Activated CD8-positive, alpha-beta memory T cell treated with anti-CD3 and anti-CD28 coated beads, Interleukin-2, amount 10 ng/mL, durations not matched to agents 7 days and 5 days (primary cell): ENCODE measurements at regions of chr20 and their contacts with region 1.

Region 1: DNA sequence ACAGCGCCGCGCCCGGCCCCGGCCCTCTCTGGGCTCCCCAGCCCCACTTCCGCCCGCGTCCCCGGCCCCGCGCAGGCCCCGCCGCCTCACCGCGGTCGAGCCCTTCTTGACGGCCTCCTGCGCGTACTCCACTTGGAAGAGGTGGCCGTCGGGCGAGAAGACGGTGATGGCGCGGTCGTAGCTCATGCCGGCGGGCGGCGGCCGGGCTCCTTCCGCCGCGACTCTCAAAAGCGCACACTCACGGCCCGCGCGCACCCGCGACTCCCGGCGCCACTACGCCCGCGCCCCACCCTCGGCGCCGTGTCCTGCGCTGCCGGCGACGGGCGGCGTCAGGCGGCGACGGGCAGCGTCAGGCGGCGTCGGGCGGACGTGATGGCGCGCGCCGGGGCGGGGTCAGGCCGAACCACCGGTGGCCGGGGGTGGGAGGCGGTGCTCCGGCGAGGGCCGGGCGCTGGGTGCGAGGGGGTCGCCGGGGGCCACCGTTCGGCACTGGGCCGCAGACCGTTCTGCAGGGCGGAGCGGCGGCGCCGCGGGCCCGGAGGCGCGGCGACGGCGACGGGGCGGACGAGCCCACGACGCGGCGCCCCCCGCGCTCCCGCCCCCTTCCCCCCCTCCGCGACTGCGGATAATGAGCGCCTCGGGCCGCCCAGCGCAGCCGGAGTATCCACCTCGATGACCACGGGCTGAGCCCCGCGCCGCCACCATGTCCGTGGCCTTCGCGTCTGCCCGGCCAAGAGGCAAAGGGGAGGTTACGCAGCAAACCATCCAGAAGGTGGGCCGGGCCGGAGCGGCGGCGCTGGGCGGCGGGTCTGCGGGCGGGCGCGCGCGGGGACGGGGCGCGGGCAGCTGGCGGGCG is at the starts of genes PSMA7 and SS18L1:
- DNase-seq: peak; percentile 88
- ATAC-seq: peak; percentile 90
- H3K4me3 Mint-ChIP-seq: peak within 1 kb of the TSS; percentile 95
- H3K27ac Mint-ChIP-seq: peak within 1 kb of the TSS; percentile 91
- H3K4me1 Mint-ChIP-seq: peaks cover 48% of the 10 kb centered on the region
- H3K27me3 Mint-ChIP-seq: no peaks in the 10 kb centered on the region
- total RNA-seq, gene PSMA7: 287 to 359 TPM
- total RNA-seq, gene SS18L1: 19.5 to 23.0 TPM

Region 2: DNA sequence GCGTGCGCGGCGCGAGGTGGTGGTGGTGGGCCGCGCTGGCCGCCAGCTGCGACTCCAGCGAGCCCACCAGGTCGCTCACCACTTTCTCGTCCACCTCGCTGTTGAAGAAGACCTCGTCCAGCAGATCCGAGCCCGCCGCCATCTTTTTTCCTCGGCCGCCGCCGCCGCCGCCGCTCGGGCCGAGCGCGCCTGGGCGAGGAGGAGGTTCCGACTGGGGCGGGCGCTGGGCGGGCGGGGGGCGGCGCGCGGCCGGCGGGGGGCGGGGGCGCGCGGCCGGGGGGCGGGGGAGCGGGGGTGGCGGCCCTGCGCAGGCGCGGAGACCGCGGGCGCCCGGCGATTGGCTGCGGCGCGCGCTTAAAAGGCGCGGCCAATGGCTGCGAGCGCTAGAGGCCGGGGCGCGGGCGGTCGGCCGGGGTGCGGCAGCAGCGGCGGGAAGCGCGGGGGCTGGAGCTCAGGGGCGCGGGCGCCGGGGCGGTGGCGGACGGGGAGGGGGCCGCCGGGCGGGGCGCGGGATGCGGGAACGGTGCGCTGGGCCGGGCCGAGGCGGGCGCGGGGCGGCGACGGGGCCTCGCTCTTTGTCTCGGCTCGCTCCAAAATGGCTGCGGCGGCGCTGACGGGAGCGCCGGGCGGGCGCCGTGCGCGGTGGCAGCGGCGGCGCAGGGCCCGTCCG is 77.5 kb before region 1 on chr20 and contains the start of gene TAF4:
- CTCF ChIA-PET with region 1: interaction called, 11 read pairs
- DNase-seq: peak; percentile 82
- ATAC-seq: peak; percentile 82
- H3K4me3 Mint-ChIP-seq: peak within 1 kb of the TSS; percentile 73
- H3K27ac Mint-ChIP-seq: peak within 1 kb of the TSS; percentile 78
- H3K4me1 Mint-ChIP-seq: peaks cover 34% of the 10 kb centered on the region
- H3K27me3 Mint-ChIP-seq: peaks cover 3% of the 10 kb centered on the region
- total RNA-seq, gene TAF4: 21.1 to 24.2 TPM

Region 3: GRCh38 chr20:62163986-62164762 is 20.8 kb after region 1 on chr20:
- CTCF ChIA-PET with region 1: no interaction called
- DNase-seq: no peak
- ATAC-seq: no peak
- H3K4me3 Mint-ChIP-seq: no peak overlapping the region
- H3K27ac Mint-ChIP-seq: no peak overlapping the region
- H3K4me1 Mint-ChIP-seq: peaks cover 15% of the 10 kb centered on the region
- H3K27me3 Mint-ChIP-seq: no peaks in the 10 kb centered on the region

Region 4: DNA sequence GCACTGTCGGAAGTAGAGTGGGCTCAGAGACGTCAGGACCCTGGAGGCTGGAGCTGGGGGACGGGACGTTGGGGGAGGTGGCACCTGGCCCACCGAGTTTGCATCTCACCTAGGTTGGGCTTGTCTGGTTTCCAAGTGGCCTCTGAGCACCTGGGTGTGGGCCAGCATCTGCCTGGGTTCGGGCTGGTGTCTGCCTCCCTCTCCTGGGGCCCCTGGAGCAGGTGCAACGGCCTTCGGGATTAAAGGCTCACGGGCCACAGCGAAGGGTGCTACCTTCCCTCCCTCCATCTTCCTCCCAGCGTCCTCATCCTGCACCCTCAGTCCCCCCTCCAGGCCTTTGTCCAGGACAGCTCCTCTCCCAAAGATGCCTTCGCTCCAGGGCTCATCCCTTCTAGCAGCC is 70.7 kb after region 1 on chr20:
- CTCF ChIA-PET with region 1: no interaction called
- DNase-seq: no peak
- ATAC-seq: no peak
- H3K4me3 Mint-ChIP-seq: no peak overlapping the region
- H3K27ac Mint-ChIP-seq: no peak overlapping the region
- H3K4me1 Mint-ChIP-seq: no peaks in the 10 kb centered on the region
- H3K27me3 Mint-ChIP-seq: peaks cover 14% of the 10 kb centered on the region

Region 5: GRCh38 chr20:62227977-62228958 is 84.9 kb after region 1 on chr20:
- CTCF ChIA-PET with region 1: no interaction called
- DNase-seq: no peak
- ATAC-seq: peak; percentile 24
- H3K4me3 Mint-ChIP-seq: no peak overlapping the region
- H3K27ac Mint-ChIP-seq: no peak overlapping the region
- H3K4me1 Mint-ChIP-seq: no peaks in the 10 kb centered on the region
- H3K27me3 Mint-ChIP-seq: no peaks in the 10 kb centered on the region